ENCODE measurements at regions of chr3 and their contacts with region 1.

Region 1: GRCh38 chr3:111717601-111718000 is 122.5 kb upstream of the ZBED2 start:
- DNase-seq: peak; percentile 80
- ATAC-seq: peak; percentile 93
- H3K4me3 ChIP-seq: no peak overlapping the region
- H3K4me3 Mint-ChIP-seq: no peak overlapping the region
- H3K27ac ChIP-seq: no peak overlapping the region
- H3K27ac Mint-ChIP-seq: no peak overlapping the region
- H3K4me1 ChIP-seq: no peaks in the 10 kb centered on the region
- H3K4me1 Mint-ChIP-seq: peaks cover under 1% of the 10 kb centered on the region
- H3K27me3 ChIP-seq: no peaks in the 10 kb centered on the region
- H3K27me3 Mint-ChIP-seq: no peaks in the 10 kb centered on the region
- CTCF ChIP-seq: peak; percentile 95

Region 2: GRCh38 chr3:111691293-111691909 is 26.2 kb before region 1 on chr3:
- CTCF ChIA-PET with region 1: interaction called, 34 read pairs
- POLR2A ChIA-PET with region 1: no interaction called
- intact Hi-C with region 1: no loop called
- DNase-seq: peak; percentile 56
- ATAC-seq: peak; percentile 49
- H3K4me3 ChIP-seq: no peak overlapping the region
- H3K4me3 Mint-ChIP-seq: no peak overlapping the region
- H3K27ac ChIP-seq: no peak overlapping the region
- H3K27ac Mint-ChIP-seq: no peak overlapping the region
- H3K4me1 ChIP-seq: peaks cover 2 to 19% of the 10 kb centered on the region in 2 donors
- H3K4me1 Mint-ChIP-seq: peaks cover 22% of the 10 kb centered on the region
- H3K27me3 ChIP-seq: no peaks in the 10 kb centered on the region
- H3K27me3 Mint-ChIP-seq: no peaks in the 10 kb centered on the region
- CTCF ChIP-seq: peak; percentile 62

Region 3: GRCh38 chr3:111751961-111752360 is 34.4 kb after region 1 on chr3:
- CTCF ChIA-PET with region 1: no interaction called
- POLR2A ChIA-PET with region 1: no interaction called
- intact Hi-C with region 1: no loop called
- DNase-seq: no peak
- ATAC-seq: no peak
- H3K4me3 ChIP-seq: no peak overlapping the region
- H3K4me3 Mint-ChIP-seq: no peak overlapping the region
- H3K27ac ChIP-seq: no peak overlapping the region
- H3K27ac Mint-ChIP-seq: no peak overlapping the region
- H3K4me1 ChIP-seq: no peaks in the 10 kb centered on the region
- H3K4me1 Mint-ChIP-seq: no peaks in the 10 kb centered on the region
- H3K27me3 ChIP-seq: no peaks in the 10 kb centered on the region
- H3K27me3 Mint-ChIP-seq: no peaks in the 10 kb centered on the region
- CTCF ChIP-seq: no peak

Region 4: DNA sequence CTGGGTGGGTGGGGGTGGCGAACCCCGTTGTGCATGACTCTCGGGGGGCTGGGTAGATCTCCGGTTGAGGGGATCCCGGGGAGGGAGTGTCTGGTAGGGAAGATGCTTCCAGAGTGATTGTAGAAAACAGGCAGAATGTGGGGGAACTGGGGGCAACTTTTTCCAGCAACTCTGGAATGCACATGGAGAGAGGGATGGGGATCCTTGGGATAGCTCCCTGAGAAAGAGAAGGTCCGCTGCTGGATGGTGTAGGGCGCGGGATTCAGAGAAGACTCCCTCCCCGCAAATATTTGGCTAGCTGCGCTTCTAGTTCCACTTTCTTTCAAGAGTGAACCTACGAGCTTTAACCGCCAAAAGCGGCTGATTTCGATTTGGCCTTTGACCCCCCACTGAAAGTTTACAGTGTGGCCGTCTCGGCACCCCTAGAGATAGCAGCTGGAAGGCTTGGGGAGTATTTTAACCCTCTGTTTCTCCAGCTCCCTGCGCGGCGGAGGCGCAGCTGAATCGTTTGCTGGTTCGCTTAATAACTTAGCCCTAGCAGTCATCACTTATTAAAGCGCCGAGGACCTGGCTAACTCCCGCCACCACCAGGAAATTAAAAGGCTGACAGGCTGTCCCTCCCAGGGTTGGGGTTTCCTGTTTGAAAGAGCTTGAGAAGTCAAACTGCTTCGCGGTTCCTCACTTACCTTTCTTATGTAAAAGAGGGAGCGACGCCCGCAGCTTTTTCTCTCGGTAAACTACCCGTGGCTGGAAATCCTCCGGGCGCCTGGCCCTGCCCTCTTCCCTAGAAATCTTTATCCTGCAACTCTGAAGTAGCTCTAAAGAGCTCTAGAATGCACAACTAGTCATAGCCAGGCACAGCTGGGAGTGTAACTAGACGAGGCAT is 142.6 kb after region 1 on chr3:
- CTCF ChIA-PET with region 1: interaction called, 65 read pairs
- POLR2A ChIA-PET with region 1: no interaction called
- intact Hi-C with region 1: loop called (anchors 1 kb)
- DNase-seq: peak; percentile 85
- ATAC-seq: peak; percentile 72
- H3K4me3 ChIP-seq: peak overlapping the region; percentile 78 to 90 (median 87)
- H3K4me3 Mint-ChIP-seq: peak overlapping the region; percentile 93
- H3K27ac ChIP-seq: peak overlapping the region; percentile 56 to 76
- H3K27ac Mint-ChIP-seq: peak overlapping the region; percentile 80
- H3K4me1 ChIP-seq: peaks cover 11 to 18% of the 10 kb centered on the region in 2 donors
- H3K4me1 Mint-ChIP-seq: peaks cover 19% of the 10 kb centered on the region
- H3K27me3 ChIP-seq: peaks cover 0 to 14% (median 5%) of the 10 kb centered on the region in 4 experiments
- H3K27me3 Mint-ChIP-seq: peaks cover 14% of the 10 kb centered on the region
- CTCF ChIP-seq: peak; percentile 51

Region 5: GRCh38 chr3:111978493-111979433 is 261.2 kb after region 1 on chr3 and contains the start of gene ABHD10:
- CTCF ChIA-PET with region 1: interaction called, 19 read pairs
- POLR2A ChIA-PET with region 1: no interaction called
- intact Hi-C with region 1: no loop called
- DNase-seq: peak; percentile 98
- ATAC-seq: peak; percentile 94
- H3K4me3 ChIP-seq: peak within 1 kb of the TSS; percentile 84 to 95 (median 84)
- H3K4me3 Mint-ChIP-seq: peak within 1 kb of the TSS; percentile 91
- H3K27ac ChIP-seq: peak within 1 kb of the TSS; percentile 72 to 75
- H3K27ac Mint-ChIP-seq: peak within 1 kb of the TSS; percentile 92
- H3K4me1 ChIP-seq: peaks cover 26 to 29% of the 10 kb centered on the region in 2 donors
- H3K4me1 Mint-ChIP-seq: peaks cover 38% of the 10 kb centered on the region
- H3K27me3 ChIP-seq: no peaks in the 10 kb centered on the region
- H3K27me3 Mint-ChIP-seq: no peaks in the 10 kb centered on the region
- CTCF ChIP-seq: no peak
- total RNA-seq, gene ABHD10: 40.1 and 43.2 TPM in 2 replicates

Region 6: GRCh38 chr3:112013058-112013783 is 295.6 kb after region 1 on chr3:
- CTCF ChIA-PET with region 1: interaction called, 117 read pairs
- POLR2A ChIA-PET with region 1: no interaction called
- intact Hi-C with region 1: loop called (anchors 1 kb)
- DNase-seq: peak; percentile 66
- ATAC-seq: peak; percentile 77
- H3K4me3 ChIP-seq: no peak overlapping the region
- H3K4me3 Mint-ChIP-seq: no peak overlapping the region
- H3K27ac ChIP-seq: no peak overlapping the region
- H3K27ac Mint-ChIP-seq: no peak overlapping the region
- H3K4me1 ChIP-seq: peaks cover 0 to 3% of the 10 kb centered on the region in 2 donors
- H3K4me1 Mint-ChIP-seq: peaks cover 9% of the 10 kb centered on the region
- H3K27me3 ChIP-seq: no peaks in the 10 kb centered on the region
- H3K27me3 Mint-ChIP-seq: no peaks in the 10 kb centered on the region
- CTCF ChIP-seq: peak; percentile 81